Natural killer cell (primary cell): ENCODE measurements at regions of chr16 and their contacts with region 1.

Region 1: GRCh38 chr16:75647492-75648264 is at the starts of genes KARS1 and TERF2IP:
- DNase-seq: peak; percentile 95 to 98
- ATAC-seq: peak; percentile 84 to 95 (median 89)
- H3K4me3 ChIP-seq: peak within 1 kb of the TSS; percentile 61
- H3K4me3 Mint-ChIP-seq: peak within 1 kb of the TSS; percentile 100
- H3K27ac ChIP-seq: peak within 1 kb of the TSS; percentile 96
- H3K27ac Mint-ChIP-seq: peak within 1 kb of the TSS; percentile 99
- H3K4me1 ChIP-seq: peaks cover 42% of the 10 kb centered on the region
- H3K4me1 Mint-ChIP-seq: peaks cover 58 to 60% of the 10 kb centered on the region in 2 donors
- H3K27me3 ChIP-seq: no peaks in the 10 kb centered on the region
- H3K27me3 Mint-ChIP-seq: no peaks in the 10 kb centered on the region
- CTCF ChIP-seq: no peak
- total RNA-seq, gene KARS1: 102 to 123 (median 114) TPM
- total RNA-seq, gene TERF2IP: 104 to 125 (median 116) TPM

Region 2: DNA sequence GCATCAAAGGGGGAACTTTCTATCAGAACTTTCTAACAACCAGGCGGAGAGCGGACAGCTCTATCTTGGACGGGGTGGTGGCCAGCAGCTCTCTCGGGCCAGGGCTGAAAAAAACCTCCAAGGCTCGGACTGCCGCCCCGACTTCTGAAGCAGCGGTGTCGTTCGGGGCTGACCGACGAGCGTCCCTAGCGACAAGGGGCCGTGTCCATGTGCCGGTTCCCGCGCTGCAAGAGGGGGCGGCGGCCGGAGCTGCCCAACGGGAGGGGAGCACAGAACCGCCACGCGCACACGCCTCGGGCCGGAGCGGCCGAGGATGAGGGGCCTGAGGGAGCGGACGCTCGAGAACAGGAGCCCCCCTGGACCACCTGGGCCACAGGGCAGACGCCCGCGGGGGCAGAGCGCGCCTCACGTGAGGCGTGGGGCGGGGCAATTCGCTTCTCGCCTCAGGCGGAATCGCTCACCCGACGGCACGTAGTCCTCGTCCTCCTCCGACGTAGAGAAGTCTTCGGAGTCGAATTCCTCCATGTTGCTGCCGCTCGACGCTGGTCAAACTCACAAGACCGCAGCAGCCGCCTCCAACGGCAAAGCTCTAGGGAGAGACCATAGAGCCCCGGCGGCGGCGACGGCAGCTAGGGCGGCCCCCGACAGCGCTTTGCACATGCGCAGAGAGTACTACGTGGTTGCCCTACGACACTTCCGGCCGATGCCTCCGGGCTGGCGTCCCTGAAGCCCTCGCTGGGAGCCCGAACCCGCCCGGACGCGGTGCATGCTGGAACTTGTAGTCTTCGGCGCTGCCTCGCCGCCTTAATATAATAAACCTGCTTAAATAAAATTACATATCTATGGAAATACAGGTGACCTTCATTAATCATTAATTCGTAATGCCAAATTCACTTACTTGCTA is 214.6 kb before region 1 on chr16 and contains the start of gene CFDP1:
- intact Hi-C with region 1: loop called (anchors 1 kb)
- DNase-seq: peak; percentile 93 to 98
- ATAC-seq: peak; percentile 83 to 93 (median 87)
- H3K4me3 ChIP-seq: peak within 1 kb of the TSS; percentile 86
- H3K4me3 Mint-ChIP-seq: peak within 1 kb of the TSS; percentile 96
- H3K27ac ChIP-seq: peak within 1 kb of the TSS; percentile 94
- H3K27ac Mint-ChIP-seq: peak within 1 kb of the TSS; percentile 96 to 99
- H3K4me1 ChIP-seq: peaks cover 19% of the 10 kb centered on the region
- H3K4me1 Mint-ChIP-seq: peaks cover 22 to 26% of the 10 kb centered on the region in 2 donors
- H3K27me3 ChIP-seq: no peaks in the 10 kb centered on the region
- H3K27me3 Mint-ChIP-seq: no peaks in the 10 kb centered on the region
- CTCF ChIP-seq: no peak
- total RNA-seq, gene CFDP1: 32.2 to 38.8 (median 32.3) TPM

Region 3: DNA sequence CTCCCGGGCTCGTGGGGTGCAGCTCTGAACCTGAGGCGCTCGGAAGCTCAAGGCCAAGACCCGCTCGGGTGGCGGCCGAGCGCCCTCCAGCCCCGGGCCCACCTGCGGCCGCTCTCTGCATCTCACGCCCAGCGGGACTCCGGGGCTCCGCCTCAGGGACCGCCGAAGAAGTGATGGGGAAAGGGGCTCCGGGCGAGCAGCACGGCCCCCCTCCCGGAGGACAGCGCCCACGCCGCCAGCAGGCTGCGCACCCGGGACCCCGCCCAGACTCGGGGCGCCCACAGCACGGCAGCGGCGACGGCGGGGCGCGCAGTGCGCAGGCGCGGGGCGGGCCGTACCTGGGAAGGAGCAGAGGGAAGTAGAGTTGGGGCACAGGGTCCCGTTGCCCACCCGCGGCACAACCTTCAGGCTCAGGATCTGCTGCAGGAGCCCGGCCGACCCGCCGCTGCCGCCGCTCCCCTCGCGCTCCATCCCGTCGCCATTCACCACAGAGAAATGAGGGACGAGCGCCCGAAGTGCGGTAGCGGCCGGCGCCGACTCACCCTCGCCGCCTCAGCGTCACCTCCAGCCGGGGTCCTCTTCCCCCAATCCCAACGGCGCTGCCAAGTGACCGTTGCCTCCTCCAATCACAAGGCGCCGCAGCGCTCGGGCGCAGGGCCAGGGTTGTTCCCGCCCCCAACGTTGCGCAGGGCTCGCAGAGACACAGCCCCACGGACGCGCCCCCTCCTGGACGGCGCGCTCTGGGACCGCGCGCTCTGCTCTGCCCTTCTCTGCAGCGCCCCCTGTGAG is 183.4 kb before region 1 on chr16 and contains the start of gene TMEM170A:
- intact Hi-C with region 1: loop called (anchors 1 kb)
- DNase-seq: peak; percentile 98 to 99
- ATAC-seq: peak; percentile 89 to 97 (median 91)
- H3K4me3 ChIP-seq: peak within 1 kb of the TSS; percentile 82
- H3K4me3 Mint-ChIP-seq: peak within 1 kb of the TSS; percentile 97
- H3K27ac ChIP-seq: peak within 1 kb of the TSS; percentile 99
- H3K27ac Mint-ChIP-seq: peak within 1 kb of the TSS; percentile 95 to 97
- H3K4me1 ChIP-seq: peaks cover 13% of the 10 kb centered on the region
- H3K4me1 Mint-ChIP-seq: peaks cover 46 to 52% of the 10 kb centered on the region in 2 donors
- H3K27me3 ChIP-seq: no peaks in the 10 kb centered on the region
- H3K27me3 Mint-ChIP-seq: no peaks in the 10 kb centered on the region
- CTCF ChIP-seq: no peak
- total RNA-seq, gene TMEM170A: 51.5 to 61.0 (median 53.9) TPM

Region 4: GRCh38 chr16:75519881-75520280 is 127.8 kb before region 1 on chr16:
- intact Hi-C with region 1: loop called (anchors 1 kb)
- DNase-seq: no peak
- ATAC-seq: no peak
- H3K4me3 ChIP-seq: no peak overlapping the region
- H3K4me3 Mint-ChIP-seq: peak overlapping the region; percentile 17
- H3K27ac ChIP-seq: no peak overlapping the region
- H3K27ac Mint-ChIP-seq: no peak overlapping the region
- H3K4me1 ChIP-seq: peaks cover 11% of the 10 kb centered on the region
- H3K4me1 Mint-ChIP-seq: peaks cover 10 to 12% of the 10 kb centered on the region in 2 donors
- H3K27me3 ChIP-seq: no peaks in the 10 kb centered on the region
- H3K27me3 Mint-ChIP-seq: no peaks in the 10 kb centered on the region
- CTCF ChIP-seq: no peak

Region 5: GRCh38 chr16:75555707-75556430 is 91.8 kb before region 1 on chr16 and contains the start of gene TMEM231:
- intact Hi-C with region 1: loop called (anchors 2 kb)
- DNase-seq: peak; percentile 90 to 97
- ATAC-seq: peak; percentile 96 to 97 (median 97)
- H3K4me3 ChIP-seq: peak within 1 kb of the TSS; percentile 43
- H3K4me3 Mint-ChIP-seq: peak within 1 kb of the TSS; percentile 93
- H3K27ac ChIP-seq: peak within 1 kb of the TSS; percentile 73
- H3K27ac Mint-ChIP-seq: peak within 1 kb of the TSS; percentile 77 to 94
- H3K4me1 ChIP-seq: peaks cover 15% of the 10 kb centered on the region
- H3K4me1 Mint-ChIP-seq: peaks cover 11% of the 10 kb centered on the region in 2 donors
- H3K27me3 ChIP-seq: no peaks in the 10 kb centered on the region
- H3K27me3 Mint-ChIP-seq: peaks cover 9 to 17% of the 10 kb centered on the region in 2 donors
- CTCF ChIP-seq: no peak
- total RNA-seq, gene TMEM231: 2.1 to 2.7 (median 2.4) TPM

Region 6: GRCh38 chr16:75566040-75566810 is 81.5 kb before region 1 on chr16 and contains the start of gene GABARAPL2:
- intact Hi-C with region 1: loop called (anchors 1 kb)
- DNase-seq: peak; percentile 94 to 95
- ATAC-seq: peak; percentile 78 to 93 (median 85)
- H3K4me3 ChIP-seq: peak within 1 kb of the TSS; percentile 59
- H3K4me3 Mint-ChIP-seq: peak within 1 kb of the TSS; percentile 90
- H3K27ac ChIP-seq: peak within 1 kb of the TSS; percentile 76
- H3K27ac Mint-ChIP-seq: peak within 1 kb of the TSS; percentile 86 to 93
- H3K4me1 ChIP-seq: peaks cover 30% of the 10 kb centered on the region
- H3K4me1 Mint-ChIP-seq: peaks cover 20 to 26% of the 10 kb centered on the region in 2 donors
- H3K27me3 ChIP-seq: peaks cover 2% of the 10 kb centered on the region
- H3K27me3 Mint-ChIP-seq: peaks cover 16 to 19% of the 10 kb centered on the region in 2 donors
- CTCF ChIP-seq: no peak
- total RNA-seq, gene GABARAPL2: 66.2 to 74.0 (median 71.3) TPM

Region 7: GRCh38 chr16:75622761-75623605 is 24.7 kb before region 1 on chr16 and contains the start of gene ADAT1:
- intact Hi-C with region 1: loop called (anchors 1 kb)
- DNase-seq: peak; percentile 95 to 99
- ATAC-seq: peak; percentile 95 to 98 (median 95)
- H3K4me3 ChIP-seq: peak within 1 kb of the TSS; percentile 90
- H3K4me3 Mint-ChIP-seq: peak within 1 kb of the TSS; percentile 91
- H3K27ac ChIP-seq: peak within 1 kb of the TSS; percentile 93
- H3K27ac Mint-ChIP-seq: peak within 1 kb of the TSS; percentile 93 to 98
- H3K4me1 ChIP-seq: peaks cover 35% of the 10 kb centered on the region
- H3K4me1 Mint-ChIP-seq: peaks cover 41 to 42% of the 10 kb centered on the region in 2 donors
- H3K27me3 ChIP-seq: no peaks in the 10 kb centered on the region
- H3K27me3 Mint-ChIP-seq: no peaks in the 10 kb centered on the region
- CTCF ChIP-seq: no peak
- total RNA-seq, gene ADAT1: 63.5 to 65.2 (median 64.8) TPM